SK-N-SH (cell line): ENCODE measurements at regions of chr10 and their contacts with region 1.

Region 1: DNA sequence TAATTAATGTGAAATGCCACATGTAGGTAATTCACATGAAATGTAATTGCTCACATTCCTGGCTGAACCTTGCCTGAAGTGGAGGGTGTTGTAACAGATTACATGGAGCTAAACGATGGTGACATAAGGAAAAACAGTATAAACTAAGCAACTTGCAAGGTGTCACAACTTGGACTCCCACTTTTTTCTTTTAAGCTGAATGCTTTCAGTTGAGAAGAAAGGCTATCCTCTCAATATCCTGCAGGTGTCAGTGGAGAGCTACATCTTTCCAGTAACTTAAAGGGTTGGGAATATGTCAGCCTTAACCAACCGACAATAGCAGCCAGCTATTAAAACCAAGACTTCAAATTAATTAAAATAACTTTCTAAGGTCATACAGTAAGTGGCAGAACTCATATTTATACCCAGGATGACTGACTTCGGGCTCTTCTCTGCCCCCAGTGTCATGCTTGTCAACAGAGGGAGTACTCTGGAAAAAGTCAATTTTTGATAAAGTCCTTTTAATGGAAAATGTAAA is 33.7 kb downstream of the NRBF2 start:
- DNase-seq: peak; percentile 41
- H3K4me3 ChIP-seq: no peak overlapping the region
- H3K27ac ChIP-seq: peak overlapping the region; percentile 17 to 34; a peak in 1 of 4 replicates
- H3K4me1 ChIP-seq: peaks cover 0 to 5% of the 10 kb centered on the region in 2 experiments; a peak in 3 of 4 replicates
- H3K27me3 ChIP-seq: no peaks in the 10 kb centered on the region
- CTCF ChIP-seq: peak; percentile 87
- EP300 ChIP-seq: no peak
- RAD21 ChIP-seq: peak; percentile 83

Region 2: DNA sequence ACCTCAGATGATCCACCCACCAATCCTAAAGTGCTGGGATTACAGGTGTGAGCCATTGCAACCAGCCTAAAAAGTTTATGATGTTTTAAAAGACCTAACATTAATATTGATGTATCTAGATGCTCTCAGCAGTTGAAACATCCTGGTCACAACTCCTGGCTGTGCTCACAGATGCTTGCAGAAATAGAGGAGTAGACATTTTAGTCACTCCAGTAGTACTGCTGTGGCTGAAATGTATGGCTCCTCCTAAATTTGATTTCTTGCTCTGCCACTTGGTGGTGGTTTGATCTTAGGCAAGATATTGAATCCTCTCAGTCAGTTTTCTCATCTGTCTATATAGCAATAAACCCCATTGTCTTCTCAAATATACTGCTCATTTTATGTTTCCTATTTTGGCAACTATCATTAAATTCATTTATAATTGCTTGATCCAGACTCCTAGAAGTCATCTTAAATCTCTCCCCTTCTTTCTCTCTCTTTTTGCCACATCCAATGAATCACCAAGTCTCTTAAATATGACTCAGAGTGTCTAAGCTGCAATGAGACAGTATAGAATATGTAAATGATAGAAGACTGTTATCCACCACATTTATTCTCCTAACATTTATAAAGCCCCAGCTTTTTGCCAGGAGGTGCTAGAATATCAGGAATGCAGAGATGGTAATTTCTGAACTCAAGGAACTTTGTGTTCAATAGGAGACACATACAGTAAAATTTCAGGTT is 111.8 kb before region 1 on chr10:
- CTCF ChIA-PET with region 1: no interaction called
- POLR2A ChIA-PET with region 1: no interaction called
- DNase-seq: no peak
- H3K4me3 ChIP-seq: no peak overlapping the region
- H3K27ac ChIP-seq: no peak overlapping the region
- H3K4me1 ChIP-seq: no peaks in the 10 kb centered on the region
- H3K27me3 ChIP-seq: no peaks in the 10 kb centered on the region; the same call in 1 of the 2 replicates
- CTCF ChIP-seq: no peak
- EP300 ChIP-seq: no peak
- RAD21 ChIP-seq: no peak

Region 3: GRCh38 chr10:63192826-63193225 is 26.0 kb after region 1 on chr10:
- CTCF ChIA-PET with region 1: interaction called, 24 read pairs
- POLR2A ChIA-PET with region 1: no interaction called
- DNase-seq: no peak
- H3K4me3 ChIP-seq: no peak overlapping the region
- H3K27ac ChIP-seq: no peak overlapping the region
- H3K4me1 ChIP-seq: peaks cover 0 to 13% of the 10 kb centered on the region in 2 experiments; a peak in 1 of 4 replicates
- H3K27me3 ChIP-seq: no peaks in the 10 kb centered on the region
- CTCF ChIP-seq: no peak
- EP300 ChIP-seq: no peak
- RAD21 ChIP-seq: no peak

Region 4: DNA sequence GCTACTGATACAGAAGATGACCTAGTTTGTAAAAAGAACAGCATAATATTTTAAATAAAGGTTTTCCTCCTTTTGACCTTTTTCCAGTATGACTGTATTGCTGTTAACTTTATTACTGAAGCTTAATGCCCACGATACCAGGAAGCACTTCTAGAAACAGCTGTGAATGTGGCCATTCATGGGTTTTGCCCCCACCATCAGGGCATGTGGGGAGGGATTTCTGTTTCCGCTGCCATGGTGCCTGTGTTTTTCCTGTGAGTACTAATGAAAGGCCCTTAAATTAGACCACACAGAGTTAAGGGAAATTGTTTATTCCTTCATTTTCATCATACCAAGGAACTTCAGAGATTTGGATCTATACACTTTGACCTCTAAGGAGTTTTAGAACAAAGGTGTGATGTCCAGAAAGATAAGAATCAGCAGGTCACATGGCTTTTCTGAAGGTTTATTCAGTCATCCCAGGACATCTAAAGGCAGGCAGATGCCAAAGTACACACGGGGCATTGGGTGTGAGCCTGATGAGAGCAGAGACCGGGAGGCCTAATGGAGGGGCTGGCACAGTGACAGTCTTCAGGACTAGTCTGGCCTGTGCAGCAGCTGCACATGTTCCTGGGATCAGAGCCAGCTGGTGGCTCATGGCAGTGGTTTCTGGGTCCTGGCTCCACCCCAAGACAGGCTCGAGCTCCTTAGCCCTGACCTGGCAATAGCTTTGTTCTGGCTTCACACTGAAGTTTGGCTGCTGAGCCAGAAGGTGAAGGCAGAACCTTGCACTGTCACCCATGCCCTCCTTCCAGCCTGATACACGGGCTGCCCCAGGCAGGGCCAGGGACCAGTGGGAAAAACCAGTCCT is 545.3 kb after region 1 on chr10:
- CTCF ChIA-PET with region 1: interaction called, 199 read pairs
- POLR2A ChIA-PET with region 1: no interaction called
- DNase-seq: peak; percentile 82
- H3K4me3 ChIP-seq: no peak overlapping the region; a peak in 1 of 4 replicates
- H3K27ac ChIP-seq: peak overlapping the region; percentile 98 to 100
- H3K4me1 ChIP-seq: peaks cover 39 to 54% of the 10 kb centered on the region in 2 experiments
- H3K27me3 ChIP-seq: no peaks in the 10 kb centered on the region
- CTCF ChIP-seq: no peak
- EP300 ChIP-seq: peak; percentile 94 to 97
- RAD21 ChIP-seq: peak; percentile 31; the same call in 1 of the 2 replicates

Region 5: GRCh38 chr10:63767138-63767801 is 600.5 kb after region 1 on chr10:
- CTCF ChIA-PET with region 1: interaction called, 25 read pairs
- POLR2A ChIA-PET with region 1: no interaction called
- DNase-seq: no peak
- H3K4me3 ChIP-seq: no peak overlapping the region
- H3K27ac ChIP-seq: no peak overlapping the region
- H3K4me1 ChIP-seq: peaks cover 2 to 8% of the 10 kb centered on the region in 2 experiments; a peak in 3 of 4 replicates
- H3K27me3 ChIP-seq: no peaks in the 10 kb centered on the region; the same call in 1 of the 2 replicates
- CTCF ChIP-seq: peak; percentile 74
- EP300 ChIP-seq: no peak
- RAD21 ChIP-seq: peak; percentile 79